Left lung (tissue), 14 donors: ENCODE measurements at regions of chr1 and their contacts with region 1.

Region 1: GRCh38 chr1:99472893-99473292 is 173.0 kb upstream of the PALMD start:
- DNase-seq: no peak
- ATAC-seq: no peak
- H3K4me3 ChIP-seq: no peak overlapping the region
- H3K27ac ChIP-seq: no peak overlapping the region
- H3K4me1 ChIP-seq: no peaks in the 10 kb centered on the region
- H3K27me3 ChIP-seq: no peaks in the 10 kb centered on the region
- CTCF ChIP-seq: no peak

Region 2: DNA sequence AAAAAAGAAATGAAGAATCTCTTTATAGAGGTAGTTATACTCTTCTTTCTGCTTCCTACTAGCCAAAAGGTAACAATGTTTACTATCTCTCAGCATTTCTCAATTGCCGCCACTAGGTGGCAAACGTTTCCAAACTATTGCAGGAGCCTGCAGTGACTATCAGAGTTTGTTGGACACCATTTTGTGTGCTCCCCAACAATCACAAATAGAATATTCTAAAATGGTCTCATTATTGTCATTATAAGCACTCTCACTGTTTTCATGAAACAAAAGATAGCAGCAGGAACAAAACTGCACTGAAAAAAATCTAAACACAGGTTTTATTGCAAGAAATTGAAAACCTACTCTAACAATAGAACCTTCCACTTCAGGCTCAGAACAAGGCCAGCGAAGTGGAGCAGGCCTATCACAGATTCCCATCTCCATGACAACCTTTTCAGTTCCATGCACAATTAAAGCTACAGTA is 292.5 kb before region 1 on chr1:
- intact Hi-C with region 1: loop called in 1 of 2 experiments (anchors 10 kb)
- DNase-seq: peak in 3 of 4 donors; percentile 60 to 86 (median 80)
- ATAC-seq: peak; percentile 98
- H3K4me3 ChIP-seq: no peak overlapping the region
- H3K27ac ChIP-seq: peak overlapping the region in 1 of 2 donors; percentile 28
- H3K4me1 ChIP-seq: no peaks in the 10 kb centered on the region
- H3K27me3 ChIP-seq: no peaks in the 10 kb centered on the region
- CTCF ChIP-seq: peak; percentile 61 to 64